A673 (cell line): ENCODE measurements at regions of chr2 and their contacts with region 1.

Region 1: GRCh38 chr2:137838255-137839092 is 125.8 kb upstream of the HNMT start:
- DNase-seq: peak; percentile 60
- H3K4me3 ChIP-seq: no peak overlapping the region
- H3K27ac ChIP-seq: no peak overlapping the region
- H3K4me1 ChIP-seq: no peaks in the 10 kb centered on the region
- H3K27me3 ChIP-seq: peaks cover 6% of the 10 kb centered on the region
- CTCF ChIP-seq: peak; percentile 69

Region 2: DNA sequence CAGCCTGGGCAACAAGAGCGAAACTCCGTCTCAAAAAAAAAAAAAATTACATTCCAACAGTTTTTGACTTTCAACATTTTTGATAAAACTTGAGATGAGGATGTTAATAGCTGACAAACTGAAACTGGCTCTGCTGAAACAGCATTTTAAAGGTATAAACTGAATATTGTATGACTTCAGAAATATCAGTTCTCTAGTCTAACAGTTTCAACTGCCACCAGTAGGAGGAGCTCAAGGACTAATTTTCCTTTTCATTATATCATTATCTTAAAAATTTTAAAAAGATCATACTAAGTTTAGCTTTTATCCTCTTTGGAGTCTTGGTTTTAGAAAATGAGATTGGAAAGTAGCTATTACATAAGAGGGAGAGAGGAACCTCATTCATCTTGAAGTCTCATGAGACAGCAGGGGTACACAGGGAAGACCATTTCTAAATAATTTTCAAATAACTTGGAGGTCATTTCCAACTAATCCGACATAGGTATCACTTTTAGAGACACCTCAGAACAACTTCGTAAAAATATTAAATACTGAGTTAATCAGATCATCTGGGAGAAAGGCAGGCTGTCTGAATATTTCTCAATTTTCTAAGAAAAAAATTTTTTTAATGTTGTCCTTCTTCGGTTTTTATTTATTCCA is 1924.6 kb before region 1 on chr2:
- CTCF ChIA-PET with region 1: no interaction called
- POLR2A ChIA-PET with region 1: no interaction called
- intact Hi-C with region 1: loop called (anchors 10 kb)
- DNase-seq: peak; percentile 57
- H3K4me3 ChIP-seq: no peak overlapping the region
- H3K27ac ChIP-seq: no peak overlapping the region
- H3K4me1 ChIP-seq: no peaks in the 10 kb centered on the region
- H3K27me3 ChIP-seq: no peaks in the 10 kb centered on the region
- CTCF ChIP-seq: peak; percentile 82

Region 3: DNA sequence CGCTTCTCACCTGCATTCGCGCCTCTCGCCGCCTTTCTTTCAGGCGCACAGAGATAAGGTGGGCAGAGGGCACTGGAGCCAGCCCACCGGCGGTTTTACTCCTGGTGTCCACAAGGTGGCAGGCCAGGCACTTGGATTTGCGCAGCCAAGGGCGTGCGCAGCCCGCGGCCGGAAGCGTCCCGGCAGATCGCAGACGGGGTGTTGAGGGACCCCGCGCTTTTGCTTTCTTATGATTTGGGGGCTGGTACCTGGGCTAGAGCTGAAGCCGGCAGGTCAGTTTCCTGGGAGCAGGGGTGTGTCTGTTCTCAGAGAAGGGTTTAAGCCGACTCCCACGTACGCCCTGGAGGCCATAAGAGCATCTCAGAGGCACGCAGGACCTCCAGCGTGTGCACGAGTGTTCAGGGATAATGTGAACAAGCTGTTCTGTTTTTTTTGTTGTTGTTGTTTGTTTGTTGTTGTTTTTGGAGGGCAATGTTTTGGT is 1414.9 kb before region 1 on chr2:
- CTCF ChIA-PET with region 1: no interaction called
- POLR2A ChIA-PET with region 1: no interaction called
- intact Hi-C with region 1: loop called (anchors 2 kb)
- DNase-seq: peak; percentile 73
- H3K4me3 ChIP-seq: peak overlapping the region; percentile 25
- H3K27ac ChIP-seq: no peak overlapping the region
- H3K4me1 ChIP-seq: no peaks in the 10 kb centered on the region
- H3K27me3 ChIP-seq: peaks cover 61% of the 10 kb centered on the region
- CTCF ChIP-seq: peak; percentile 87

Region 4: GRCh38 chr2:136874258-136874657 is 964.2 kb before region 1 on chr2:
- CTCF ChIA-PET with region 1: no interaction called
- POLR2A ChIA-PET with region 1: no interaction called
- intact Hi-C with region 1: loop called (anchors 2 kb)
- DNase-seq: peak; percentile 45
- H3K4me3 ChIP-seq: no peak overlapping the region
- H3K27ac ChIP-seq: no peak overlapping the region
- H3K4me1 ChIP-seq: no peaks in the 10 kb centered on the region
- H3K27me3 ChIP-seq: no peaks in the 10 kb centered on the region
- CTCF ChIP-seq: peak; percentile 67

Region 5: DNA sequence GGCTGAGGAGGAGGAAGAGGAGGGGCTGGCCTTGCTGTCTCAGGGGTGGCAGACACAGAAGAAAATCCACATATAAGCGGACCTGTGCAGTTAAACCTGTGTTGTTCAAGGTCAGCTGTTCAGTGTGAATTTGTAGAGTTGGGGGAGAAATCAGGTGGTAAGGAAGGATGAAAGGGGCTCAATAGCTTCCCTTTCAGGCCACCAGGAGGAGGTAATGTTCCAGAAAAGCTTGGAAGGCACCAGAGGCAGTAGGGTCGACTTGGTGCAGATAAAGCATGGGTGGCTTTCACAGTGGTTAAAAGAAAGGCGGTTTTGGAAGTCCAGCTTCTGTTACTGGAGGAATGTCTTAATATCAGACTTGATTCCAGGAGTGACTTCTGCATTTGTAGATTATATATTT is 905.8 kb before region 1 on chr2:
- CTCF ChIA-PET with region 1: no interaction called
- POLR2A ChIA-PET with region 1: no interaction called
- intact Hi-C with region 1: loop called (anchors 2 kb)
- DNase-seq: peak; percentile 33
- H3K4me3 ChIP-seq: no peak overlapping the region
- H3K27ac ChIP-seq: no peak overlapping the region
- H3K4me1 ChIP-seq: no peaks in the 10 kb centered on the region
- H3K27me3 ChIP-seq: no peaks in the 10 kb centered on the region
- CTCF ChIP-seq: peak; percentile 45

Region 6: DNA sequence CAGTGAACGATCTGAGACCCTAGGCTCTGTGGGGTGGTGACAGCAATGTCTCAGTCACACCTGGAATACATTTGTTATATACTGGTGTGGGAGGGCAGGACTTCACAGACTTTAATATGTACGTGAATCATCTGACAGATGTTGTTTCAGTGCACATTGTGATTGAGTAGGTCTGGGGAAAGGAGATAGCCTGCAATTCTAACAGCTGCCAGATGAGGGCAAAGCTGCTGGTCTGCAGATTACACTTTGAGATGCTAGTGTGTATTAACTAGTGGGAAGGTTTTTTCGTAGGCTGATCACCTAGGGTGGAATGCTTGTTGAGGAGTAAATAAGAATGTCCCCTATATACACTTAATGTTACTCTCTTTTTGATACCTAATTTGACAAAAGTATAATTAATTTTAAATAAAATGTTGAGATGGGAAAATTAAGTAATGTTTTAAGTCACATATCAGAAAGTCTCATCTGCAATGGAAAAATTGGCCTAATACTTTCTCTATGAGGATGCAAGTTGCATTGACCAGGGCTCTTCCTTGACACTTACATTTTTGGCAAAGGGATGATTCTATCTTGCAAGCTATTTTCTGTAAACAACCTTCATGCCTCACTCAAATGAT is 371.1 kb before region 1 on chr2:
- CTCF ChIA-PET with region 1: no interaction called
- POLR2A ChIA-PET with region 1: no interaction called
- intact Hi-C with region 1: loop called (anchors 1 kb)
- DNase-seq: peak; percentile 28
- H3K4me3 ChIP-seq: no peak overlapping the region
- H3K27ac ChIP-seq: no peak overlapping the region
- H3K4me1 ChIP-seq: no peaks in the 10 kb centered on the region
- H3K27me3 ChIP-seq: no peaks in the 10 kb centered on the region
- CTCF ChIP-seq: peak; percentile 60

Region 7: GRCh38 chr2:137659612-137660011 is 178.9 kb before region 1 on chr2:
- CTCF ChIA-PET with region 1: no interaction called
- POLR2A ChIA-PET with region 1: no interaction called
- intact Hi-C with region 1: loop called (anchors 10 kb)
- DNase-seq: peak; percentile 2
- H3K4me3 ChIP-seq: no peak overlapping the region
- H3K27ac ChIP-seq: no peak overlapping the region
- H3K4me1 ChIP-seq: no peaks in the 10 kb centered on the region
- H3K27me3 ChIP-seq: no peaks in the 10 kb centered on the region
- CTCF ChIP-seq: 0 out of 2 replicates have a peak, but pooled peaks have one; percentile 22